Activated CD4-positive, alpha-beta T cell treated with anti-CD3 and anti-CD28 coated beads for 36 hours (primary cell): ENCODE measurements at regions of chr17 and their contacts with region 1.

Region 1: GRCh38 chr17:12974005-12974531 is 43.8 kb downstream of the ELAC2 start:
- DNase-seq: no peak
- ATAC-seq: no peak
- H3K4me3 Mint-ChIP-seq: no peak overlapping the region
- H3K27ac Mint-ChIP-seq: no peak overlapping the region
- H3K4me1 Mint-ChIP-seq: no peaks in the 10 kb centered on the region
- H3K27me3 Mint-ChIP-seq: peaks cover 32% of the 10 kb centered on the region

Region 2: DNA sequence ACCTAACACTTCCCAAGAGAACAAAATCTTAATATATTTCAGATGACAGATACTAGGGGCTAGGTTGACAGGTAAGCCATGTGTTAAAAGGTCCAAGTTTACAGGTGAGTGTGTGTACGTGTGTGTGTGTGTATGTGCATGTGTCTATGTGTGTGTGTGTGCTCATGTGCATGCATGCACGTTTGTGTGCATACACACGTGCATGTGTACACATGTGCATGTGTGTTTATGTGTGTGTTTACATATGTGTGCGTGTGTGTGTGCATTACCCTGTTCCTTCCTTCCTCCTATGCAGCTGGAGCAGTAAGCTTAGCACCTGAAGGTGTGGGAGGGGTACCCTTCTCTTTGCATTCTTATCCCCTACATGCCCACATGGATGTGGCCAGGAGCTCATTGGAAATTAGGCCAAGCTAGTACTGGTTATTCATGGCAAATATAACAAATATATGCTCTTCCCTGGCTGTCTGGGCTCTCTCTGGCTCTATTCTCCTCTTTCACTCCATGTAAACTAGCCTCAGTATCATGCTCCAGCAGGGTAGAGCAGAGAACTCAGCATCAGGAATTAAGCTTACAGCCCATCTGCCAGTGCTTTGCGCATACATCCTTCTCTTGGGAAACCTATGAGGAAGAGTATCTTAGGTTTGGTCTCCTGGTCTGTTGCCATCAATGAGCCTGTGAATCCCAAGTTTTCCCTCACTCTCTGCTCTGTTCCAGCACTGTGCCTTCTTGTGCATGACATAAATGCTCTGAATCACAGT is 566.4 kb before region 1 on chr17:
- CTCF ChIA-PET with region 1: no interaction called
- POLR2A ChIA-PET with region 1: interaction called, 16 read pairs
- intact Hi-C with region 1: no loop called
- DNase-seq: no peak
- ATAC-seq: no peak
- H3K4me3 Mint-ChIP-seq: no peak overlapping the region
- H3K27ac Mint-ChIP-seq: no peak overlapping the region
- H3K4me1 Mint-ChIP-seq: no peaks in the 10 kb centered on the region
- H3K27me3 Mint-ChIP-seq: no peaks in the 10 kb centered on the region